Activated T-helper 1 cell treated with anti-CD3 and anti-CD28 coated beads, Interleukin-12 subunit alpha, Interleukin-12 subunit beta, Interleukin-2, Interleukin-4 antibody, amounts not matched to agents 30 ng/mL and 10 ng/mL and 1 ng/mL, durations not matched to agents 14 hours and 24 hours and 36 hours (primary cell): ENCODE measurements at regions of chr3 and their contacts with region 1.

Region 1: GRCh38 chr3:66220602-66221377 is at the start of gene SLC25A26:
- DNase-seq: peak; percentile 97
- H3K4me3 Mint-ChIP-seq: peak within 1 kb of the TSS; percentile 98
- H3K27ac Mint-ChIP-seq: peak within 1 kb of the TSS; percentile 85
- H3K4me1 Mint-ChIP-seq: peaks cover 41% of the 10 kb centered on the region
- H3K27me3 Mint-ChIP-seq: peaks cover 2% of the 10 kb centered on the region
- total RNA-seq, gene SLC25A26: 17.0 and 18.8 TPM in 2 replicates

Region 2: GRCh38 chr3:66010739-66011655 is 209.8 kb before region 1 on chr3:
- intact Hi-C with region 1: no loop called
- DNase-seq: no peak
- H3K4me3 Mint-ChIP-seq: no peak overlapping the region
- H3K27ac Mint-ChIP-seq: no peak overlapping the region
- H3K4me1 Mint-ChIP-seq: no peaks in the 10 kb centered on the region
- H3K27me3 Mint-ChIP-seq: no peaks in the 10 kb centered on the region

Region 3: GRCh38 chr3:66033241-66034138 is 187.3 kb before region 1 on chr3:
- intact Hi-C with region 1: loop called (anchors 1 kb)
- DNase-seq: no peak
- H3K4me3 Mint-ChIP-seq: no peak overlapping the region
- H3K27ac Mint-ChIP-seq: peak overlapping the region; percentile 51
- H3K4me1 Mint-ChIP-seq: peaks cover 13% of the 10 kb centered on the region
- H3K27me3 Mint-ChIP-seq: peaks cover 34% of the 10 kb centered on the region

Region 4: DNA sequence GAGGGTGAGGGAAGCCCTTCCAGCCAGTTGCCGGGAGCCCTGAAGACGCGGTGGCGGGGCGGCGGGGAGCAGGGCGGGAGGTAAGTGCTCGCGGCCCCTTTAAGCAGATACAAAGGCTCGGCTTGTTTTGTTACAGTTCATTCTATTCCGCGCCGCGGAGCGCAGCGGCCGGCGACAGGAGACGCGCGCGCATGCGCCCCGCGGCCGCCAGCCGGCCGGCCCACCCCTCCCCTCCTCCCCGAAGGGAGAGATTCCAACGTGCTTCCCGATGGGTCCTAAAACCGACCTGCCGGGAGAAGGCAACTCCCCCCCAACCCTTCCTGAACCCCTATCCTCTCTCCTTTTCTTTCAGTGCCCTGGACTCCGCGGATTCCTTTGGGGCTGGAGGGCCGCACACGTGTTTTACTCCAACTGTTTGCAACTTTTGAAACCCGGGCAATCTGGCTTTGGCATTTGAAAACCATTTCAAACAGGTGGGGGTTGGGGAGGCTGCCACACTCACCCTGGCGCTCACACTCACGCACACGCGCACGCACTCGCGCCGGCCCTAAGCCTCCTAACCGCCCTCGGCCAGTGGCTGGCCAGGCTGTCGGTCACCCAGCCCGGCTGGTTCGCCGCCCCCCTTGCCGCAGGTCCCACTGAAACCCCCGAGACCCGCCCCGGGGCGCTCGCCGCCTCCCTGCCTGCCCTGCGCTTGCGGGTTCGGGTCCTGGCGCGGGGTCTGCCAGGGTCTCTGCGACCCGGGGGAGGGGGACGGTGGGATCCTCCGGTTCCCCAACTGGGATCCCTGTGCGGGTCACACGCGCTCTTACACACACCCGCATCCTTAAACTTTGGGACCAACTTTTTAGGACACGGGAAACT is 181.8 kb before region 1 on chr3 and contains the start of gene MAGI1:
- intact Hi-C with region 1: loop called (anchors 2 kb)
- DNase-seq: peak; percentile 12
- H3K4me3 Mint-ChIP-seq: peak within 1 kb of the TSS; percentile 94
- H3K27ac Mint-ChIP-seq: peak within 1 kb of the TSS; percentile 75
- H3K4me1 Mint-ChIP-seq: peaks cover 8% of the 10 kb centered on the region
- H3K27me3 Mint-ChIP-seq: peaks cover 62% of the 10 kb centered on the region
- total RNA-seq, gene MAGI1: 0.69 and 0.75 TPM in 2 replicates

Region 5: GRCh38 chr3:66239513-66240123 is 18.8 kb after region 1 on chr3:
- intact Hi-C with region 1: loop called (anchors 1 kb)
- DNase-seq: no peak
- H3K4me3 Mint-ChIP-seq: peak overlapping the region; percentile 15
- H3K27ac Mint-ChIP-seq: peak overlapping the region; percentile 87
- H3K4me1 Mint-ChIP-seq: peaks cover 31% of the 10 kb centered on the region
- H3K27me3 Mint-ChIP-seq: peaks cover 1% of the 10 kb centered on the region

Region 6: DNA sequence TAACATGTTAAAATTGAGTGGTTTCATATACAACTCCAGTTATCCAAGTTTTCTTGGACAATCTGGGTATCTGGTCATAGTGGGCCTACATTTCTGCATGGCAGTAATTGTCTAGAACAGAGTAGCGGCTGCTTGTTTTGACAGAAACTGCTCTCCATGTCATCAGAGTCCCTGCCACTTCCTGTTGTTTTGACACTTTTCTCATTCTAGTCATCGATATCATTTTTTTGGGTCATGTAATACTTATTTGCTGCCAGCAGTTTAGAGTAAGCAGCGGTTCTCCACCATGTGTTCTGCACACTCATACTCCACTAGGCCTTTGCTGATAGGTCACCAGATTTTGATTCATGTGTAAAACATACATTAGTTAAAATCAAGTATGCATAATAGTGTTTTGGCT is 81.5 kb after region 1 on chr3:
- intact Hi-C with region 1: loop called (anchors 2 kb)
- DNase-seq: peak; percentile 37
- H3K4me3 Mint-ChIP-seq: peak overlapping the region; percentile 32
- H3K27ac Mint-ChIP-seq: peak overlapping the region; percentile 91
- H3K4me1 Mint-ChIP-seq: peaks cover 65% of the 10 kb centered on the region
- H3K27me3 Mint-ChIP-seq: no peaks in the 10 kb centered on the region

Region 7: DNA sequence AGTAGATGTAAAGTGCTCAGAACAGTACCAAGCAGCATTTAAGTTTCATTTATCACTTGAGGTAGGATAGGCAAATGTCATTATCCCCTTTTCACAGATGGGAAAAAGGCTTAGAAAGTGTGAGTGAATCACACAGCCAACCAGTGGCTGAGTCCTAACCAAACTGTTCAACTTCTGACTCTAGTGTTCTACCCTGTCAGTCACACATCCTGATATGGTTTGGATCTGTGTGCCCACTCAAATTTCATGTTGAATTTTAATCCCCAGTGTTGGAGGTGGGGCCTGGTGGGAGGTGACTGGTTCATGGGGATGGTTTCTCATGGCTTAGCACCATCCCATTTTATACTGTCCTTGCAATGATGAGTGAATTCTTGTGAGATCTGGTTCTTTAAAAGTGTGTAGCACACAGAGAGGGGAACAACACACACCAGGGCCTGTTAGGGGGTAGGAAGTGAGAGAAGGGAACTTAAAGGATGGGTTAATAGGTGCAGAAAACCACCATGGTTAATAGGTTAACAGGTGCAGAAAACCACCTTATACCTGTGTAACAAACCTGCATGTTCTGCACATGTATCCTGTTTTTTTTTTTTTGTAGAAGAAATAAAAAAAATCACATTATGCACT is 1128.9 kb after region 1 on chr3:
- intact Hi-C with region 1: loop called (anchors 1 kb)
- DNase-seq: no peak
- H3K4me3 Mint-ChIP-seq: no peak overlapping the region
- H3K27ac Mint-ChIP-seq: peak overlapping the region; percentile 3
- H3K4me1 Mint-ChIP-seq: peaks cover 14% of the 10 kb centered on the region
- H3K27me3 Mint-ChIP-seq: peaks cover 3% of the 10 kb centered on the region